PC-3 (cell line): ENCODE measurements at regions of chr1 and their contacts with region 1.

Region 1: DNA sequence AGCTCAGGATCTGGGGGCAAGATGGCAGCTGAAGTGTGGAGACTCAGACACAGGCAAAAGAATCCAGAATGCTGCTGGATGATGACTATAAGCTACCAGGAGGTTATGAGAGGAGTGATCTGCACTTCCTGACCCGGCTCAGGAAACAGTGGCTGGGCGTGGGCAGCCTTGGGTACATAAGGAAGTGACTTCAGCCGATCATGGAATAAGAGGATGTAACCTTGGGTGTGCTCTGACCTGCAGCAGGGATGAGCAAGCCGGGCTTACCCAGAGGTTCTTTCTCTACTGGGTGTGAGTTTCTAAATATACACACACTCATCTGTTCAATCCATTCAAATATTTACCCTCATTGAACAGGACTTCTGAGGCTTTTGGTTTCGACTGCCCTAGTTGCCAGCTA is 62.7 kb downstream of the CD34 start:
- DNase-seq: peak; percentile 98
- ATAC-seq: peak; percentile 98
- H3K4me3 ChIP-seq: peak overlapping the region; percentile 42; the same call in 1 of the 2 replicates
- H3K27ac ChIP-seq: peak overlapping the region; percentile 95
- H3K4me1 ChIP-seq: peaks cover 40% of the 10 kb centered on the region
- H3K27me3 ChIP-seq: no peaks in the 10 kb centered on the region
- CTCF ChIP-seq: no peak

Region 2: GRCh38 chr1:207868774-207869721 is 20.8 kb after region 1 on chr1:
- CTCF ChIA-PET with region 1: interaction called, 6 read pairs
- POLR2A ChIA-PET with region 1: interaction called, 4 read pairs
- intact Hi-C with region 1: loop called (anchors 1 kb)
- DNase-seq: peak; percentile 91
- ATAC-seq: peak; percentile 71
- H3K4me3 ChIP-seq: peak overlapping the region; percentile 98
- H3K27ac ChIP-seq: peak overlapping the region; percentile 76
- H3K4me1 ChIP-seq: peaks cover 47% of the 10 kb centered on the region
- H3K27me3 ChIP-seq: no peaks in the 10 kb centered on the region
- CTCF ChIP-seq: peak; percentile 66

Region 3: GRCh38 chr1:207885129-207886032 is 37.1 kb after region 1 on chr1:
- CTCF ChIA-PET with region 1: no interaction called
- POLR2A ChIA-PET with region 1: no interaction called
- intact Hi-C with region 1: no loop called
- DNase-seq: peak; percentile 90
- ATAC-seq: peak; percentile 99
- H3K4me3 ChIP-seq: no peak overlapping the region
- H3K27ac ChIP-seq: no peak overlapping the region
- H3K4me1 ChIP-seq: peaks cover 10% of the 10 kb centered on the region; the same call in 1 of the 2 replicates
- H3K27me3 ChIP-seq: no peaks in the 10 kb centered on the region
- CTCF ChIP-seq: peak; percentile 98